ENCODE measurements at regions of chr11 and their contacts with region 1.

Region 1: GRCh38 chr11:26761361-26761809 is 39.5 kb upstream of the SLC5A12 start:
- DNase-seq: no peak
- H3K4me3 ChIP-seq: no peak overlapping the region
- H3K27ac ChIP-seq: no peak overlapping the region
- H3K4me1 ChIP-seq: peaks cover 0 to 24% (median 0%) of the 10 kb centered on the region in 4 donors
- H3K27me3 ChIP-seq: no peaks in the 10 kb centered on the region
- CTCF ChIP-seq: no peak

Region 2: GRCh38 chr11:27008811-27009535 is 247.6 kb after region 1 on chr11:
- intact Hi-C with region 1: loop called (anchors 10 kb)
- DNase-seq: no peak
- H3K4me3 ChIP-seq: no peak overlapping the region
- H3K27ac ChIP-seq: no peak overlapping the region
- H3K4me1 ChIP-seq: peaks cover 0 to 25% (median 13%) of the 10 kb centered on the region in 4 donors
- H3K27me3 ChIP-seq: no peaks in the 10 kb centered on the region
- CTCF ChIP-seq: no peak

Region 3: GRCh38 chr11:27626269-27626937 is 865.0 kb after region 1 on chr11:
- intact Hi-C with region 1: no loop called
- DNase-seq: no peak
- H3K4me3 ChIP-seq: no peak overlapping the region
- H3K27ac ChIP-seq: no peak overlapping the region
- H3K4me1 ChIP-seq: no peaks in the 10 kb centered on the region
- H3K27me3 ChIP-seq: no peaks in the 10 kb centered on the region
- CTCF ChIP-seq: no peak

Measured in tibial artery (tissue), 4 donors.